Colonic mucosa (tissue), 4 donors: ENCODE measurements at regions of chr7 and their contacts with region 1.

Region 1: GRCh38 chr7:70693686-70694360 is 438.1 kb upstream of the GALNT17 start:
- DNase-seq: peak; percentile 88
- H3K4me3 ChIP-seq: peak overlapping the region; percentile 68
- H3K27ac ChIP-seq: peak overlapping the region; percentile 73
- H3K4me1 ChIP-seq: no peaks in the 10 kb centered on the region
- H3K27me3 ChIP-seq: no peaks in the 10 kb centered on the region
- CTCF ChIP-seq: peak; percentile 26

Region 2: GRCh38 chr7:70040970-70041766 is 652.7 kb before region 1 on chr7:
- intact Hi-C with region 1: loop called (anchors 10 kb)
- DNase-seq: no peak
- H3K4me3 ChIP-seq: no peak overlapping the region
- H3K27ac ChIP-seq: no peak overlapping the region
- H3K4me1 ChIP-seq: no peaks in the 10 kb centered on the region
- H3K27me3 ChIP-seq: no peaks in the 10 kb centered on the region
- CTCF ChIP-seq: peak; percentile 19

Region 3: GRCh38 chr7:70171369-70171920 is 522.4 kb before region 1 on chr7:
- intact Hi-C with region 1: loop called (anchors 5 kb)
- DNase-seq: no peak
- H3K4me3 ChIP-seq: no peak overlapping the region
- H3K27ac ChIP-seq: no peak overlapping the region
- H3K4me1 ChIP-seq: no peaks in the 10 kb centered on the region
- H3K27me3 ChIP-seq: no peaks in the 10 kb centered on the region
- CTCF ChIP-seq: no peak

Region 4: DNA sequence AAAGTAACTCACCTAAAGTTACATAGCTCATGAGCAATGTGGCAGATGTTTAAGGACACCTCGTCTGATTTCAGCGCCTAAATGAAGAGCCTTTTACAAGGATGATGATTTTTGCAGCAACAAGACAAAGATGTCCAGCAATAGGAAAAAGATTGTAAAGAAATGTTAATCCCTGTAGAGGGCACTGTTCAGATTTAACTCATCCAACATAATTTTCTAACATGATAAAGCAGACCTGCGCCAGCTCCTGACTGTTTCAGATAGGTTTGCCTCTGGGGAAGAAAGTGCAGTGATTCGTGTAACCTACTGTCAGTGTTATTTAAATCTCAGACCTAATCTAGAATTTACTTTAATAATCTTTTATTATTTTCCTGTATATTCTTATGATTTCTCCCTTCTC is 500.3 kb before region 1 on chr7:
- intact Hi-C with region 1: loop called (anchors 5 kb)
- DNase-seq: no peak
- H3K4me3 ChIP-seq: no peak overlapping the region
- H3K27ac ChIP-seq: no peak overlapping the region
- H3K4me1 ChIP-seq: no peaks in the 10 kb centered on the region
- H3K27me3 ChIP-seq: no peaks in the 10 kb centered on the region
- CTCF ChIP-seq: peak; percentile 24

Region 5: DNA sequence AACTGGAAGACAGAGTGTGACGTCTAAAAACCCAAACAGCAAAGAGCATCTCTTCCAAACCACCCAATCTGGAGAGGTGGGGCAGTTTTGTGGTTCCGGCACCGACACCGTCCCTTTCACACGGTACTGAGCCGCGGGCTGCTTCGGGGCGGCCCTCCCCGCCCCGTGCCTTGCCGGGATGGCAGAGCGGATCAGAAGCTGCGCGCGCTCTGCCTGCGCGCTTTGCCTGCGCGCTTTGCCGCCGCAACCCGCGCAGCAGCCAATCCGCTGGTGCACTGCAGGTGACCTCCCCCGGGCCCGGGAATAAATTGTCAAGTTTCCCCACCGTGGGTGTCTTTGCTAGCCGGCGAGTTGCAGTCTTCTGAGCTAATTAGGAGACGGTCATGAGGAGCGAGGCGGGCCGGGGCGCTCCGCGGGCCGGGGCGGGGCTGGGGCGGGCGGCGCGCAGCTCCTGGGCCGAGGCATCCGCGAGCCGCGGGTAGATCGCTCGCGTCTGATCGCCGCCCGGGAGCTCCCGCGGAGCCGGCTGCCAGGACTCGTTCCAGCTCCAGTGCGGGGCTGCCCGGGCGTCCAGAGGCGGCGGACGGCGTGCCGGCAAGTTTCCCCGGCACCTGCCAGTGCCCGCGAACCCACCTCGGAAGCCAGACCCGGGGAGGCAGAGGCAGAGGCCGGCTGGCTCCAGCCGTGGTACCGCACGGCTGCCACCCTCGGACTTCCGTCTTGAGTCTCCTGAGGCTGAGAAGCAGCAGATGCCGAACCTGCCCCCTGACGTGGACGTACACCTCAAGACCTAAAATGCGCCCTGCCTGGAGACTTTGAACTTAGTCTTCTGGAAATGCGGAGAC is 97.8 kb before region 1 on chr7:
- intact Hi-C with region 1: loop called (anchors 10 kb)
- DNase-seq: peak; percentile 70
- H3K4me3 ChIP-seq: peak overlapping the region; percentile 49
- H3K27ac ChIP-seq: peak overlapping the region; percentile 56
- H3K4me1 ChIP-seq: no peaks in the 10 kb centered on the region
- H3K27me3 ChIP-seq: no peaks in the 10 kb centered on the region
- CTCF ChIP-seq: no peak